A549 (cell line): ENCODE measurements at regions of chr19 and their contacts with region 1.

Region 1: GRCh38 chr19:33535226-33535625 is 13.6 kb upstream of the PEPD start:
- DNase-seq: no peak
- ATAC-seq: peak; percentile 8 to 20; a peak in 1 of 6 replicates
- H3K4me3 ChIP-seq: no peak overlapping the region
- H3K27ac ChIP-seq: no peak overlapping the region
- H3K4me1 ChIP-seq: no peaks in the 10 kb centered on the region
- CTCF ChIP-seq: no peak
- EP300 ChIP-seq: no peak
- POLR2A ChIP-seq: no peak
- RAD21 ChIP-seq: no peak

Region 2: GRCh38 chr19:33521480-33522370 is 13.5 kb before region 1 on chr19 and contains the start of gene PEPD:
- CTCF ChIA-PET with region 1: interaction called, 10 read pairs
- POLR2A ChIA-PET with region 1: interaction called, 13 read pairs
- DNase-seq: peak; percentile 93 to 100
- ATAC-seq: peak; percentile 85 to 94
- H3K4me3 ChIP-seq: peak within 1 kb of the TSS; percentile 91
- H3K27ac ChIP-seq: peak within 1 kb of the TSS; percentile 76 to 86
- H3K4me1 ChIP-seq: peaks cover 7% of the 10 kb centered on the region
- CTCF ChIP-seq: no peak
- EP300 ChIP-seq: peak in 1 of 2 experiments; percentile 29; a peak in 1 of 5 replicates
- POLR2A ChIP-seq: peak; percentile 98
- RAD21 ChIP-seq: no peak
- polyA plus RNA-seq, gene PEPD: 85.5 and 99.5 TPM in 2 replicates

Region 3: DNA sequence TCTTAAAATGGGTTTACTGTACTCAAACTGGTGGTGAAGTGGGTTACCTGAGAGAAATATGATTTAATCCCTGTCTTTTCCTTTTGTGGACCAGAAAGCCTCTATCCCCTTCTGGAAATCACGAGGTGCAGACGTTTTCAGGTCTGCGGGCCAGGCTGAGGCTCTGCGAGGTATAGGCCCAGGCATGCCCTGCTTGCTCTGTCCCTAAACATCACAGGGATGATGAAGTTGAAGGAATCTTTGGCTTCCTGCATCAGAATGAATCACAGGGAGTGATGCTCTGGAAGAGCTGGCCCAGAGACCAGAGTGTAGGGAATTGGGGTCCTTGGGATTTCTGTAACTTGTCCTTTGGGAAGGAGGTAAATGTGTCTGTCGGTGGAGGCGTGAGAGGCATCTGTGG is 68.2 kb after region 1 on chr19:
- CTCF ChIA-PET with region 1: no interaction called
- POLR2A ChIA-PET with region 1: no interaction called
- DNase-seq: no peak
- ATAC-seq: no peak; a peak in 1 of 6 replicates
- H3K4me3 ChIP-seq: no peak overlapping the region
- H3K27ac ChIP-seq: no peak overlapping the region
- H3K4me1 ChIP-seq: no peaks in the 10 kb centered on the region
- CTCF ChIP-seq: no peak
- EP300 ChIP-seq: no peak
- POLR2A ChIP-seq: no peak
- RAD21 ChIP-seq: no peak